Left cardiac atrium (tissue), 4 donors: ENCODE measurements at regions of chr3 and their contacts with region 1.

Region 1: GRCh38 chr3:4584456-4585249 is 91.5 kb downstream of the ITPR1 start:
- DNase-seq: peak; percentile 44
- ATAC-seq: peak; percentile 7 to 9

Region 2: DNA sequence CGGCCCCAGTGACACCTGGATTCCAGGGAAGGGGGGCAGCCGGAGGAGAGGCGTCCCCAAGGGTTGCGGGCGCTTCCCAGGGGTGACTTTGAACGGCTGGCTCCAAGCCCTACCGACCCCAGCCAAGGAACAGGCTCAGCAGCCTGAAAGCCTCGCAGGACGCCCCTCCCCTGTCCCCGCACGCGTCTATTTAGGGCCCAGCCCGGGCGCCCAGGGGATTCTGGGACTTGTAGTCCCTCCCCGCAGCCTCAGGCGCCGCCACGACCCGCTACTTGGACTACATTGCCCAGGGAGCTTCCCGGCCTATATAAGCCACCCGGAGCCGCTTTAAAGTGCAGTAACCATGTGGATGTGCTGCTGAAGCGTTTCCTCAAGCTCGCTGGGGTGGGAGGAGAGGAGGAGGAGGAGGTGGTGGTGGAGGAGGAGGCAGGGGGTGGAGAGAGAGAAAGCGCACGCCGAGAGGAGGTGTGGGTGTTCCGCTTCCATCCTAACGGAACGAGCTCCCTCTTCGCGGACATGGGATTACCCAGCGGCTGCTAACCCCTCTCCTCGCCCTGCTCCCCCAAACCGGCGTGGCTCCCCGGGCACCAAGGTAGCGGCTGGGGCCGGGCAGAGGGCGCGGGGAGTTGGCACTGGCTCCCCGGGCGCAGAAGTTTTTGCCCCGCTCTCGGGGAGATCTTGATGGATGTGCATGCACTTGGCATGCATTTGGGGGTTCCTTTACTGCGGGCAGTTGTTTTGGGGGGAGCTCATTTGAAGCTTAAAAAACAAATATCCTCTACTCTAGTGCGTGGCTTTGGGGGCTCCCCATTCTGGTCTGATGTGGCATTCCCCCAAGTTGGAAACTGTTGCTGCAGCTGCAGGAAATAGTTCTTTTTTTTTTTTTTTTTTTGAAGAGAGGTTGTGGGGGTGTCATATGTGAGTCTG is 91.4 kb before region 1 on chr3 and contains the start of gene ITPR1:
- intact Hi-C with region 1: loop called in 1 of 2 experiments (anchors 5 kb)
- DNase-seq: peak; percentile 99
- ATAC-seq: peak; percentile 97 to 98
- total RNA-seq, gene ITPR1: 36.8 to 43.8 TPM